ENCODE measurements at regions of chr12 and their contacts with region 1.

Region 1: DNA sequence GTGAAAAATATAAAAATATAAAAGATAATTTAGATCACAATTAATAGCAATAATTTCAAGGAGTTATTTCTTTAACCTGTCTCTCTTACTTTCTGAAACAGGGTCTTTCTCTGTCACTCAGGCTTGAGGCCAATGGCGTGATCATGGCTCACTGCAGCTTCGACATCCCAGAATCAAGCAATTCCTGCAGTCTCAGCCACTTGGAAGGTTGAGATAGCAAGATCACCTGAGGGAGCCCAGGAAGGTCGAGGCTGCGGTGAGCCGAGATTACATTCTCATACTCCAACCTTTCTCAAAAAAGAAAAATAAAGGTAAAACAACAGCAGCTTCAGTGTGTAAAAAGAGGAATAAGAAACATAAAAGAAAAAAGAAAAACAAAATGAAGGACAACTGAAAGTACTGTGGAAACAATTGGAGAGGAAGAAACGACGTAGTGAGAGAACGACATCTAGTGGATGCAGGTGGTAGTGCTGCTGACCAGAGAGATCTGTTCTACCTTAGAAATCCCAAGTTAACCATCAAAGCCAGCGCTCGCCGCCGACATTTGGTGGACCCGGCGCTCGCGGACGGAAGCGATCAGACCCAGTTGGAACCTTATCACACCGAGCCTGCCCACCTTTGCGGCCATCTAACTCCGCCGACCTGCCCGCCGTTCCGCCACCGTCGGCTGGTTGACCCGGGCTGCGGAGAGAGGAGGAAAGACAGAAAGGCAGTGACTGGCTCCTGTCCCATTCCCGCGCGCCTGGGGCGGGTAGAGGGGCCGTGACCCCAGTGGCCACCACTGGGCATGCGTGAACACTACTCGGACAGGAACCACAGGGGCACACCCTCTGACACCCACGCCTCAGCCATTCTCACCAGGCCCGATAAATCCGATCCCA is 196.1 kb downstream of the ALG10 start:
- DNase-seq: peak; percentile 84

Region 2: GRCh38 chr12:34033628-34034282 is 184.7 kb before region 1 on chr12:
- in situ Hi-C with region 1: loop called (anchors 25 kb)
- DNase-seq: peak; percentile 39

Region 3: GRCh38 chr12:34163431-34163830 is 55.0 kb before region 1 on chr12:
- in situ Hi-C with region 1: no loop called
- DNase-seq: no peak

Region 4: GRCh38 chr12:34275129-34275528 is 56.7 kb after region 1 on chr12:
- in situ Hi-C with region 1: no loop called
- DNase-seq: no peak